ENCODE measurements at regions of chr1 and their contacts with region 1.

Region 1: GRCh38 chr1:24861821-24862727 is 68.0 kb downstream of the RUNX3 start:
- DNase-seq: no peak
- ATAC-seq: peak in 1 of 2 donors; percentile 27
- H3K4me3 ChIP-seq: no peak overlapping the region
- H3K27ac ChIP-seq: no peak overlapping the region
- H3K4me1 ChIP-seq: no peaks in the 10 kb centered on the region
- H3K27me3 ChIP-seq: no peaks in the 10 kb centered on the region

Region 2: DNA sequence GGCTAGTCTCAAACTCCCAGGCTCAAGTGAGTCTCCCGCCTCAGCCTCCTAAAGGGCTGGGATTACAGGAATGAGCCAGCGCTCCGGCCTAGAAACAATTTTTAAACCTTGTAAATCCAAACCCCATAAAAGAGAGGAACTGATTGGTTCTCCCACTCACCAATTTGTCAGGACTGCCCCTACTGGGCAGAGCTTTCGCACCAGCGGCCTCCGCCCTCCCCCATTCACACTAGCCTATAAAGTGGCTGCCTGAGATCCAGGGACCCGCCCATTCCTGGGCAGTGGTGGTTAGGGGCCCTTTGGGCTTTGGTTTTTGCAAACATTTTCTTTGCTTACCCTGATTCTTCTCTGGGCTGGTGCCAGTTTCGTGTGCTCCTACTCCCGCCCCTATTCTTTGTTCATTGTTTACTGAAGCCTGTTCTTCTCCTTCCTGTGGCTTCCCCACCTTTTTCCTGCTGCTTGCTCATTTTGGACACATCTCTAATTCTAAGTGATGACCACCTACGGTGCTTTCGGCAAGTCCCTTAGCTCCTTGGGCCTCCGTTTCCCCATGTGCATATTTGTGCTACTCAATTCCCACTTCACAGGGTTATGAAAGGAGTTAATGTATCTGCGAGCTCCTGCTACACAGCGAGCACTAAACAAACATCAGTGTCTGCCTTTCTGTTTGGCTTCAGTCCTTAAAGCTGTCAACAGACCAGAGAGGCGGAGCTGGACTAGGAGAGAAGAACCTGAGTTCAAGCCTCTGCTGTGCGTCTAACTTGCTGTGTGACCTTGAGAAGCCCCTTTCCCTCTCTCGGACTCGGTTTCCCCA is 156.6 kb before region 1 on chr1:
- intact Hi-C with region 1: no loop called
- DNase-seq: peak; percentile 91 to 96 (median 94)
- ATAC-seq: peak; percentile 98 to 99
- H3K4me3 ChIP-seq: peak overlapping the region; percentile 17
- H3K27ac ChIP-seq: peak overlapping the region; percentile 84
- H3K4me1 ChIP-seq: peaks cover 2% of the 10 kb centered on the region
- H3K27me3 ChIP-seq: no peaks in the 10 kb centered on the region

Region 3: DNA sequence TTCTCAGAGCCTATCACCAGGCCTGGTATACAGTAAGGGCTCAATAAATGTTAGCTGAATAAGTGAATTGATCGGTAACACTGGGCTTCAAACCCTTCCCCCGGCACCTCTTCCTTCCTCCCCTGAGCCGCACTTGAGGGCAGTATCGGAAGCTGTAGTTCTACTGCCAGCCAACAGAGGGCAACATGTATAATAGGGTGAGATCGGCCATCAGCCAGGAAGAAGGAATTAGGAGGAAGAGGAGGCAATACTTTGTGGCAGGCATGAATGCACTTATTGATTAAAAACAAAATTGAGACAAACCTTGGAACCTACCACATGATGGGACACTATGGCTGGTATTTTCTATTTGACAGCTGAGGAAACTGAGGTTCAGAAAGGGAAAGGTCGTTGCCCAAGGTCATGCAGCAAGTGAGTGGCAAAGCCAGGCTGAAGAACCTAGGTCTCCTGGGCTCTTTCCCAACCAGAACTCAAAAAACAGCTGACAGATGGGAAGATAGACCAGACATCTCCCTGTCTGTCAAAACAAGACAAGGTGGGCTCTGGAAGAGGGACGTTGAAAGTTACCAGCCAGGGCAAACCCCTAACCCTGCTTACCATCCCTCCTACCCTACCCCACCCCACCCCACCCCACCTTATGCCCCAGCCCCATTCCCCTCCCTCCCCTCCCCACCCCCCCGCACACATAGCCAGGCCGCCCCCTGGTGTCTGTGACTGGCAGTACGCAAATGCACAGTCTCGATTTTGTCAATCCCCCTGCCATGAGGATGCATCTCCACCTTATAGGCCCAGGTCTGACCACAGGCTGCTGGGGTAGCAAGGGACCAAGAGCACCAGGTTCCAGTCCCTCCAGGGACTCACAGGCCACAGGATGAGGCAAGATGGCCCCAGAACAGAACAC is 175.3 kb after region 1 on chr1:
- intact Hi-C with region 1: loop called in 1 of 4 experiments (anchors 10 kb)
- DNase-seq: no peak
- ATAC-seq: no peak
- H3K4me3 ChIP-seq: no peak overlapping the region
- H3K27ac ChIP-seq: no peak overlapping the region
- H3K4me1 ChIP-seq: no peaks in the 10 kb centered on the region
- H3K27me3 ChIP-seq: no peaks in the 10 kb centered on the region

Region 4: GRCh38 chr1:25198663-25199252 is 336.7 kb after region 1 on chr1:
- intact Hi-C with region 1: loop called in 2 of 4 experiments (anchors 5 kb)
- DNase-seq: peak in 1 of 3 donors; percentile 24
- ATAC-seq: peak; percentile 38 to 40
- H3K4me3 ChIP-seq: no peak overlapping the region
- H3K27ac ChIP-seq: no peak overlapping the region
- H3K4me1 ChIP-seq: no peaks in the 10 kb centered on the region
- H3K27me3 ChIP-seq: no peaks in the 10 kb centered on the region

Region 5: DNA sequence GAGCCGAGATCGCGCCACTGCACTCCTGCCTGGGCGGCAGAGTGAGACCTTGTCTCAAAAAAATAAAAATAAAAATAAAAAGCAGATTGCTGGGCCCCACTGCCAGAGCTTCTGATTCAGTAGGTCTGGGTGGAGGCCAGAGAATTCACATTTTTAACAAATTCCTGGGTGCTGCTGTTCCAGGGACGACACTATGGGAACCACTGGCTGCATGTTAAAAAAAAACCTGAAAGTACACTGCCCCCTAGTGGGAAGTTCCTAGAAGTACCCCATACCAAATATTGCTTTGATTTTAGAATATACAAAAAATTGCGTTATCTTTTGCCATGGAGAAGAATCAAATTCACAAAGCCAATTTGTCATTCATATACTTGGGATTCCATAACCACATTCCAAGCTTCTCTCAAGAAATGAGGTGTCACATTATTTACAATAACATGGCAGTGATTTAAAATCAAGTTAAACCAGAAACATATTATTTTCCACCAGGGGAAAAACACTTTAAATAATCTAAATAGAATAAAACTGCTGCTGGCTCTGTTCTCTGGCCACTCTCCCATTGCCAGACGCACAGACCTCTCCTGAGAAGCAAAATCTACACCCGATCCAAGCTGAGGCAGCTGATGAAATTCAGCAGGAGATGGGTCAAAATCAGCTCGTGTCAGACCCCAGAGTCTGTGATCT is 342.9 kb after region 1 on chr1:
- intact Hi-C with region 1: loop called in 1 of 4 experiments (anchors 5 kb)
- DNase-seq: peak in 1 of 3 donors; percentile 6
- ATAC-seq: peak in 1 of 2 donors; percentile 56
- H3K4me3 ChIP-seq: no peak overlapping the region
- H3K27ac ChIP-seq: no peak overlapping the region
- H3K4me1 ChIP-seq: no peaks in the 10 kb centered on the region
- H3K27me3 ChIP-seq: no peaks in the 10 kb centered on the region